AG04450 (cell line): ENCODE measurements at regions of chr7 and their contacts with region 1.

Region 1: GRCh38 chr7:116588641-116589594 is 64.1 kb downstream of the CAV1 start:
- DNase-seq: no peak
- H3K4me3 ChIP-seq: no peak overlapping the region
- H3K27ac ChIP-seq: no peak overlapping the region
- H3K27me3 ChIP-seq: no peaks in the 10 kb centered on the region
- CTCF ChIP-seq: peak; percentile 46

Region 2: GRCh38 chr7:116180302-116180701 is 408.6 kb before region 1 on chr7:
- CTCF ChIA-PET with region 1: interaction called, 38 read pairs
- POLR2A ChIA-PET with region 1: no interaction called
- DNase-seq: no peak
- H3K4me3 ChIP-seq: no peak overlapping the region
- H3K27ac ChIP-seq: no peak overlapping the region
- H3K27me3 ChIP-seq: no peaks in the 10 kb centered on the region
- CTCF ChIP-seq: peak; percentile 83

Region 3: DNA sequence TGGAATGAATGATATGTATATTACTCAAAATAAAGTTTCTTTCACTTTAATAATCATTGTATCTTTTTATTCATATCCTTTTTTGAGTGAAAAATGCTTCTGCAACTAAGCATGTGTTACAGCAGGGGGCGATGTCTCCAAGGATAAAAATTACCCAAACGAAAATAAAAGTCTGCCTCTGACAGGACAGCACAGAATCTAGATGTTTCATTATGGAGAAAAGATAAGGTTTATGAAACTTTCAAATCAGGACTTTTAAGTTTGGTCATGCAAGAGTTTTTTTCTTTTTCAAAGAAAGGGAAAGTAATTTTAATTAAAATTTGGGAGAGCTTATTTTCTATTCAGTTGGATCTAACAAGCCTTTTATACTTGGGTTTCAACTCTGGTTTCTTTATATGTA is 330.2 kb before region 1 on chr7:
- CTCF ChIA-PET with region 1: interaction called, 132 read pairs
- POLR2A ChIA-PET with region 1: interaction called, 3 read pairs
- DNase-seq: no peak
- H3K4me3 ChIP-seq: no peak overlapping the region
- H3K27ac ChIP-seq: no peak overlapping the region
- H3K27me3 ChIP-seq: no peaks in the 10 kb centered on the region
- CTCF ChIP-seq: peak; percentile 76

Region 4: GRCh38 chr7:116543664-116544063 is 45.3 kb before region 1 on chr7:
- CTCF ChIA-PET with region 1: interaction called, 11 read pairs
- POLR2A ChIA-PET with region 1: interaction called, 10 read pairs
- DNase-seq: no peak
- H3K4me3 ChIP-seq: no peak overlapping the region
- H3K27ac ChIP-seq: no peak overlapping the region
- H3K27me3 ChIP-seq: no peaks in the 10 kb centered on the region
- CTCF ChIP-seq: no peak

Region 5: GRCh38 chr7:116557066-116557585 is 31.8 kb before region 1 on chr7:
- CTCF ChIA-PET with region 1: no interaction called
- POLR2A ChIA-PET with region 1: no interaction called
- DNase-seq: no peak
- H3K4me3 ChIP-seq: no peak overlapping the region
- H3K27ac ChIP-seq: no peak overlapping the region
- H3K27me3 ChIP-seq: no peaks in the 10 kb centered on the region
- CTCF ChIP-seq: no peak

Region 6: GRCh38 chr7:116786791-116787443 is 198.0 kb after region 1 on chr7:
- CTCF ChIA-PET with region 1: interaction called, 11 read pairs
- POLR2A ChIA-PET with region 1: no interaction called
- DNase-seq: no peak
- H3K4me3 ChIP-seq: no peak overlapping the region
- H3K27ac ChIP-seq: no peak overlapping the region
- H3K27me3 ChIP-seq: no peaks in the 10 kb centered on the region
- CTCF ChIP-seq: peak; percentile 43